B cell (primary cell): ENCODE measurements at regions of chr2 and their contacts with region 1.

Region 1: GRCh38 chr2:30146438-30147147 is at the start of gene YPEL5:
- DNase-seq: peak; percentile 100
- ATAC-seq: peak; percentile 81
- H3K4me3 ChIP-seq: peak within 1 kb of the TSS; percentile 87 to 98 (median 94)
- H3K4me3 Mint-ChIP-seq: peak within 1 kb of the TSS; percentile 90
- H3K27ac ChIP-seq: peak within 1 kb of the TSS; percentile 99
- H3K27ac Mint-ChIP-seq: peak within 1 kb of the TSS; percentile 100
- H3K4me1 ChIP-seq: peaks cover 38 to 46% of the 10 kb centered on the region in 2 donors
- H3K4me1 Mint-ChIP-seq: peaks cover 45% of the 10 kb centered on the region
- H3K27me3 ChIP-seq: no peaks in the 10 kb centered on the region
- H3K27me3 Mint-ChIP-seq: no peaks in the 10 kb centered on the region
- CTCF ChIP-seq: no peak
- total RNA-seq, gene YPEL5: 115 and 117 TPM in 2 replicates

Region 2: DNA sequence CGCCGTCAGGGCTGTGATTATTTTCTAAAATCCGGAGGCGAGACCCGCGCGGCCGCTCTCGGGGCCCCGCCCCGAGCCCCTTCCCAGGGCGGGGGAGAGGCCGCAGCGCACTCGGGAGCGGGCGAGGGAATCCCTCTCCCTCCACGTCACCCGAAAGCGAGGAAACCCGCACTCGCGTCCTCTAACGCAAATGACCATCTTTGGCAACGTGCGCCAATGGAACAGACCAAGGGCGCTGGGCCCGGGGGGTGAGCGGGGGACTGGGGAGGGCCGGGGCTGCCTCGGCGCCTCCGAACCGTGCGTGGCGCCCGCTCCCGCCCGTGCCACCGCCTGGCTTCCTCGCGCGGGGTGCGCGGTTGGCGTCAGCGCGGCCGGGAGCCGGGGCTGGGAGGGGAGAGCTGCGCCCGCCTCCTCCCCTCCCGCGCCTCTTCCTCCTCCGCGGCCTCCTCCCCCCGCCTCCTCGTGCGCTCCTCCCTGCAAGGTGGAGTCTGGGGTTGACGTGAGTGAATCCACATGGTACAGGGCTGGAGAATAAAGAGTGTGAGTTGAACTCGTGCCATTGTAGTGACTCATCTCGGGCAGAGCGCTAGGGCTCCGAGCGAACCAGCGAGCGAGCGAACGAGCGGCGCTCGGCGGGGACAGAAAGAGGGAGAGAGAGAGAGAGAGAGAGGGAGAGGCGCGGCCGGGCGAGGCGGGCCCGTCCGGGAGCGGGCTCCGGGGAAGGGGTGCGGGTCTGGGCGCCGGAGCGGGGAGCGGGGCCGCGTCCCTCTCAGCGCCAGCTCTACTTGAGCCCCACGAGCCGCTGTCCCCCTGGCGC is 1754.1 kb before region 1 on chr2 and contains the start of gene FOSL2:
- CTCF ChIA-PET with region 1: no interaction called
- POLR2A ChIA-PET with region 1: no interaction called
- intact Hi-C with region 1: loop called (anchors 10 kb)
- DNase-seq: peak; percentile 84
- ATAC-seq: peak; percentile 78
- H3K4me3 ChIP-seq: peak within 1 kb of the TSS; percentile 42 to 90 (median 61)
- H3K4me3 Mint-ChIP-seq: peak within 1 kb of the TSS; percentile 89
- H3K27ac ChIP-seq: peak within 1 kb of the TSS; percentile 6 to 52
- H3K27ac Mint-ChIP-seq: peak within 1 kb of the TSS; percentile 87
- H3K4me1 ChIP-seq: peaks cover 18% of the 10 kb centered on the region in 2 donors
- H3K4me1 Mint-ChIP-seq: peaks cover 25% of the 10 kb centered on the region
- H3K27me3 ChIP-seq: peaks cover 0 to 31% (median 4%) of the 10 kb centered on the region in 4 experiments
- H3K27me3 Mint-ChIP-seq: peaks cover 17% of the 10 kb centered on the region
- CTCF ChIP-seq: no peak
- total RNA-seq, gene FOSL2: 37.7 and 42.2 TPM in 2 replicates

Region 3: DNA sequence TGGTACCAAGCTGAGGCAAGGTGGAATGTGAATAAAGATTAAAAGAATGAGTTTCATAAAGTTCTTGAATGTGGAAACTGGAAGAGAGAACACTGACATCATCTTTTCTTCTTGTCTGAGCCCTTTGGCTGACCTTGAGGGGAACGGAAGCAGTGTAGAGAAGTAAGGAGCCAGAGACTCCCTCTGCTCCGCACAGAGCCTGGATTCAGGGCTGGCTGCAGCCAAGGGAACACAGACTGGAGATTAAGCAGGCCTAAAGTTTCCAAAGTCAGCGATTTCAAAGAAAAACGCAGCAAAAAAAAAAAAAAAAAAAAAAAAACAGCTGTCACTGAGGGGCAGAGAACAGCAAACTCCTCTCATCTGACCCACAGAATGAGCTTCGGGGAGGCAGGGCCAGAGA is 205.9 kb before region 1 on chr2:
- CTCF ChIA-PET with region 1: no interaction called
- POLR2A ChIA-PET with region 1: no interaction called
- intact Hi-C with region 1: no loop called
- DNase-seq: no peak
- ATAC-seq: no peak
- H3K4me3 ChIP-seq: no peak overlapping the region
- H3K4me3 Mint-ChIP-seq: no peak overlapping the region
- H3K27ac ChIP-seq: no peak overlapping the region
- H3K27ac Mint-ChIP-seq: no peak overlapping the region
- H3K4me1 ChIP-seq: no peaks in the 10 kb centered on the region
- H3K4me1 Mint-ChIP-seq: no peaks in the 10 kb centered on the region
- H3K27me3 ChIP-seq: peaks cover 0 to 2% (median 0%) of the 10 kb centered on the region in 4 experiments
- H3K27me3 Mint-ChIP-seq: peaks cover 8% of the 10 kb centered on the region
- CTCF ChIP-seq: no peak

Region 4: GRCh38 chr2:30089171-30089570 is 57.4 kb before region 1 on chr2:
- CTCF ChIA-PET with region 1: interaction called, 15 read pairs
- POLR2A ChIA-PET with region 1: no interaction called
- intact Hi-C with region 1: loop called (anchors 5 kb)
- DNase-seq: no peak
- ATAC-seq: no peak
- H3K4me3 ChIP-seq: no peak overlapping the region
- H3K4me3 Mint-ChIP-seq: no peak overlapping the region
- H3K27ac ChIP-seq: no peak overlapping the region
- H3K27ac Mint-ChIP-seq: no peak overlapping the region
- H3K4me1 ChIP-seq: no peaks in the 10 kb centered on the region
- H3K4me1 Mint-ChIP-seq: peaks cover 3% of the 10 kb centered on the region
- H3K27me3 ChIP-seq: peaks cover 0 to 24% (median 10%) of the 10 kb centered on the region in 4 experiments
- H3K27me3 Mint-ChIP-seq: peaks cover 42% of the 10 kb centered on the region
- CTCF ChIP-seq: no peak

Region 5: GRCh38 chr2:30165050-30165520 is 18.5 kb after region 1 on chr2:
- CTCF ChIA-PET with region 1: interaction called, 107 read pairs
- POLR2A ChIA-PET with region 1: interaction called, 4 read pairs
- intact Hi-C with region 1: loop called (anchors 2 kb)
- DNase-seq: peak; percentile 87
- ATAC-seq: peak; percentile 100
- H3K4me3 ChIP-seq: no peak overlapping the region
- H3K4me3 Mint-ChIP-seq: no peak overlapping the region
- H3K27ac ChIP-seq: no peak overlapping the region
- H3K27ac Mint-ChIP-seq: no peak overlapping the region
- H3K4me1 ChIP-seq: peaks cover 8% of the 10 kb centered on the region in 2 donors
- H3K4me1 Mint-ChIP-seq: peaks cover 16% of the 10 kb centered on the region
- H3K27me3 ChIP-seq: no peaks in the 10 kb centered on the region
- H3K27me3 Mint-ChIP-seq: no peaks in the 10 kb centered on the region
- CTCF ChIP-seq: peak; percentile 85

Region 6: DNA sequence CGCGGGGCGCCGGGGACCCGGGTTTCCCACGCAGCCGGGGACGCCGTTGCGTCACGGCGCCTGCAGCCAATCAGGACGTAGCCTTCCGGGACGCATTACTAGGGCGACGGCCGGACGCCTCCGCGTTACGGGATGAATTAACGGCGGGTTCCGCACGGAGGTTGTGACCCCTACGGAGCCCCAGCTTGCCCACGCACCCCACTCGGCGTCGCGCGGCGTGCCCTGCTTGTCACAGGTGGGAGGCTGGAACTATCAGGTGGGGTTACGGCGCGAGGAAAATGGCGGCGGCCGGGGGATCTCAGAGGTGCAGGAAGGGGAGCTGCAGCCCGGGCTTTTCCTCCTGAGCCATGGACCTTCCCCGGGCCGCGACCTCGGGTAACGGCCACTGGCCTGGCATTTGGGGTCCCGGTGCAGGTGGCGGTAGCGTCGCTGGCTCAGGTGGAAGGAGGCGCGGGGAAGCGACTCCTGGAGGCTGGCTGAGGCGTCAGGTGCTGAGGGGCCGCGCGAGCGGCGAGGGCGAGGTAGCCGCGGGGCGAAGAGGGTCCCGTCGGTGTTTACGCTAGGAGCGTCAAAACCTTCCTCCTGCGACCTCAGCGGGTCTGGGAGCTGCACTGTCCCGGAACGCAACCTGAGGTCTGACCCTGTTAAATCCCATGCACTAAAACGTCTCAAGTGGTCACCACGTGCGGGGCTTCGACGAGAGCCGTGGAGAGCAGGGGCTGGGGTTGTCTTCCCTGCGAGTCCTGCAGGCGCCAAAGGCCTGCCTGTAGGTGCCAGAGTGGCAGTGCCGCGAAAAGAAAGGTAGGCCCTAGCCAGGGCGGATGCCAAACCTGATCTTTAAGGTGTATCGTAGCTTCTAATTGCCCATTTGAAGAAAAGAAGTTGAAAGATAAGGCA is 300.8 kb after region 1 on chr2 and contains the start of gene LCLAT1:
- CTCF ChIA-PET with region 1: no interaction called
- POLR2A ChIA-PET with region 1: no interaction called
- intact Hi-C with region 1: loop called (anchors 2 kb)
- DNase-seq: peak; percentile 92
- ATAC-seq: peak; percentile 93
- H3K4me3 ChIP-seq: peak within 1 kb of the TSS; percentile 88 to 98 (median 97)
- H3K4me3 Mint-ChIP-seq: peak within 1 kb of the TSS; percentile 97
- H3K27ac ChIP-seq: peak within 1 kb of the TSS; percentile 82 to 84
- H3K27ac Mint-ChIP-seq: peak within 1 kb of the TSS; percentile 95
- H3K4me1 ChIP-seq: peaks cover 16 to 17% of the 10 kb centered on the region in 2 donors
- H3K4me1 Mint-ChIP-seq: peaks cover 25% of the 10 kb centered on the region
- H3K27me3 ChIP-seq: no peaks in the 10 kb centered on the region
- H3K27me3 Mint-ChIP-seq: no peaks in the 10 kb centered on the region
- CTCF ChIP-seq: peak; percentile 20
- total RNA-seq, gene LCLAT1: 21.7 and 21.9 TPM in 2 replicates

Region 7: DNA sequence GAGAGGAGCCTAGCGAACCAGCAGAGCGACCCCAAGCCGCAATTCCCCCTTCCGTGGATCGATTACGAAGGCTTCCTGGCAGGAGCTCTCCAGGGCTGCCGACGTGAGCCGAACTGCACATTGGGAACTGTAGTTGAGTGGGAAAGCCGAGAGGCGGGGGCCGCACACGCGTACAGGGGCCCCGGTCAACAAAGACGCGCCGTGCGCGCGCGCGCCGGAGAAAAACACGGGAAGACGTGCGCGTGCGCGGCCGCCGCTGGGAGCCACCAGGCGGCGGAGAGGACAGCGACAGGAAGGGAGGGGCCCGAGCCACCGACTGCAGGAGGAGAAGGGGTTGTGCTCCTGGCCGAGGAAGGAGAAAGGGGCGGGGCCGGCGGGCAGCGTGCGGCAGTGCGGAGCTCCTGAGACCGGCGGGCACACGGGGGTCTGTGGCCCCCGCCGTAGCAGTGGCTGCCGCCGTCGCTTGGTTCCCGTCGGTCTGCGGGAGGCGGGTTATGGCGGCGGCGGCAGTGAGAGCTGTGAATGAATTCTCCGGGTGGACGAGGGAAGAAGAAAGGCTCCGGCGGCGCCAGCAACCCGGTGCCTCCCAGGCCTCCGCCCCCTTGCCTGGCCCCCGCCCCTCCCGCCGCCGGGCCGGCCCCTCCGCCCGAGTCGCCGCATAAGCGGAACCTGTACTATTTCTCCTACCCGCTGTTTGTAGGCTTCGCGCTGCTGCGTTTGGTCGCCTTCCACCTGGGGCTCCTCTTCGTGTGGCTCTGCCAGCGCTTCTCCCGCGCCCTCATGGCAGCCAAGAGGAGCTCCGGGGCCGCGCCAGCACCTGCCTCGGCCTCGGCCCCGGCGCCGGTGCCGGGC is 1916.9 kb after region 1 on chr2 and contains the start of gene SPAST:
- CTCF ChIA-PET with region 1: no interaction called
- POLR2A ChIA-PET with region 1: interaction called, 3 read pairs
- intact Hi-C with region 1: loop called (anchors 2 kb)
- DNase-seq: peak; percentile 99
- ATAC-seq: peak; percentile 90
- H3K4me3 ChIP-seq: peak within 1 kb of the TSS; percentile 83 to 96 (median 89)
- H3K4me3 Mint-ChIP-seq: peak within 1 kb of the TSS; percentile 99
- H3K27ac ChIP-seq: peak within 1 kb of the TSS; percentile 71 to 78
- H3K27ac Mint-ChIP-seq: peak within 1 kb of the TSS; percentile 97
- H3K4me1 ChIP-seq: peaks cover 12 to 21% of the 10 kb centered on the region in 2 donors
- H3K4me1 Mint-ChIP-seq: peaks cover 32% of the 10 kb centered on the region
- H3K27me3 ChIP-seq: no peaks in the 10 kb centered on the region
- H3K27me3 Mint-ChIP-seq: no peaks in the 10 kb centered on the region
- CTCF ChIP-seq: peak; percentile 47
- total RNA-seq, gene SPAST: 26.8 and 28.9 TPM in 2 replicates